Left colon (tissue), 2 donors: ENCODE measurements at regions of chr6 and their contacts with region 1.

Region 1: DNA sequence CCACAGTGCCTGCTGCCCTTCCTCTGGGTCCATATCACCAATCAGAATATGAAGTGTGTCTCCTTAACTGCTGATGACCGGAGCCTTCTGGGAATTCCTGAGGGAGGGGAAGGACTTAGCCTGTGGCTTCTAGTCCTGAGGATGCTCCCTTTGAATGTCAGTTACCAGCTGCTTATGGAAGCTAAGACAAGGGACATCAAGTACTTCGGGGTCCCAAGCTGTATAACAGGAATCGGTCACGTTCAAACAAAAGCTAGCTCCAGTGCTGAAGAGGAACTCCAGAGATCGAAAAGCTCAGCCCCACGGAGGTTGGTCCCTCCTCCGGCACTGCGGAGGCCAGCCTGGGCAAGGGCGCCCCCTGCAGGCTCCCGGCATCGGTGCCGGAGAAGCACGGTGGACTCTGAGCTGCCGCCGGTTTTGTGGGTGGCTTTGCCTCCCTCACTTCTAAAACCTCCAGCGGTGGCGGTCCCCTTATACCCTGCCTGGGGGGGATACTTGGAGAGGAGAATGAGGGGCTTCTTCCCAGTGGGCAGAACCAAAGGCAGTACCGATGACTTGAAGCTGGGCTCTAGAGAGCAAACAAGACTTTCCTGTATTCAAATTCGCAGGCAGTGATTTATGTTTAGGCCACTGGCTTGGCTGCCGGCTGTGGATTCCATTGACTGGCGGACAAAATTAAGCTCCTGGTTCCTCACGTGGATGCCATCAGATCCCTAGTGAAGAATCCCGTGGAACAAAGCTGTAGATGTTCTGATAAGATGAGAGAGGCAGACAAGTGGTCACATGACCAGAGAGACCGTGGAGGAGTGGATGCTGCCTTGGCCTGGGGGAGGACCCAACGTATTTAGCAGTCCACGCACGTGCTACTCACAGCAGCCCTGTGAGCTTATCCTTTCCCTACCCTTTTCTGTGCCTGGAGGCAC is 16.2 kb upstream of the UBR2 start:
- DNase-seq: peak; percentile 67 to 89
- ATAC-seq: peak; percentile 98

Region 2: GRCh38 chr6:42260972-42261371 is 286.7 kb before region 1 on chr6:
- intact Hi-C with region 1: loop called in 1 of 2 experiments (anchors 5 kb)
- DNase-seq: peak in 1 of 2 donors; percentile 33
- ATAC-seq: peak; percentile 48